ENCODE measurements at regions of chr9 and their contacts with region 1.

Region 1: DNA sequence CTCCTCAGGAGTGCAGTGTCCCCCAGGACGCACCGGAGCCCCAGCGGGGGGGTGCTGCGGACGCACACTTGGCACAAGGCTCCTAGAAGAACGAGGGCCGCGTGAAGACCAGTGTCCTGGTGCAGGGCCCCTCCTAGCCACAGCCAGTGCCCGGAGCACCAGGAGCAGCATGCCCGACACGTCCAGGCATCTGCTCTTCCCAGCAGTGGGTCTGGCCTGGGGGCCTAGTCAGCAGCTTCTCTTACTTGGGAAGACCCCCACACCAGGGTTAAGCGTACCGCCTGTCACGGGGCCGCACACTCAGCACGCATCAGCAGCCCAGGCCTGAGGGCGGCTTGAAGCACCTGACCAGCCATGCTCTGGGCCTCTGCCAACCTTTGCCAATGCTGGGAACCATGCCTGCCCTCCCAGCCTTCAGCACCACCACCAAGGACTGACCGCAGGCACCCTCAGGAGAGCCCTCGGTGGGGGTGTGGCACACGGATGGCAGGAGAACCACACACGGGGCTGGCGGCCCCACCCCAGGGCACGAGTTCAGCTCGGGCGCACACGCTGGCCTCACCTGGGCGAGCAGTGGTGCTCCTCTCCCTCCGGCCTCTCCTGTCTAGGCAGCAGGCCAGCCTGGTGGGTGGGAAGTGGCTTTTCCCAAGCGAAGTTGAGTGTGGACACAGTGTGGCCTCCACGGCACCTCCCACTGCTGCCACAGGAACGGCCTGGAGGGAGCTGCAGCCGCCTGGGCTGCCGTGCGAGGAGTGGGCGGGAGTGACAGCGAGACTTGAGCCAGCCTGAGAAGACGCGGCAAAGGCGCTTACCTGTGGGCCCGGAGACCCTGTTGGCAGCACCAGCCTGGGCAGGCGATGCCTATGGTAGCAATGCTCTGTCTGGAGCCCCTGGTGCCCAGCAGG is 12.0 kb upstream of the AJM1 start:
- DNase-seq: no peak
- H3K4me3 ChIP-seq: no peak overlapping the region
- H3K27ac ChIP-seq: no peak overlapping the region
- H3K4me1 ChIP-seq: no peaks in the 10 kb centered on the region
- H3K27me3 ChIP-seq: no peaks in the 10 kb centered on the region
- CTCF ChIP-seq: no peak
- POLR2A ChIP-seq: no peak

Region 2: GRCh38 chr9:135898634-135899407 is 931.4 kb before region 1 on chr9:
- intact Hi-C with region 1: no loop called
- DNase-seq: no peak
- H3K4me3 ChIP-seq: no peak overlapping the region
- H3K27ac ChIP-seq: no peak overlapping the region
- H3K4me1 ChIP-seq: peaks cover 5% of the 10 kb centered on the region
- H3K27me3 ChIP-seq: no peaks in the 10 kb centered on the region
- CTCF ChIP-seq: no peak
- POLR2A ChIP-seq: no peak

Region 3: GRCh38 chr9:137034863-137035761 is 204.9 kb after region 1 on chr9:
- intact Hi-C with region 1: loop called (anchors 10 kb)
- DNase-seq: peak; percentile 83
- H3K4me3 ChIP-seq: no peak overlapping the region
- H3K27ac ChIP-seq: no peak overlapping the region
- H3K4me1 ChIP-seq: peaks cover 14% of the 10 kb centered on the region
- H3K27me3 ChIP-seq: no peaks in the 10 kb centered on the region
- CTCF ChIP-seq: peak; percentile 66 to 89 (median 88)
- POLR2A ChIP-seq: no peak